ENCODE measurements at regions of chr7 and their contacts with region 1.

Region 1: GRCh38 chr7:149028346-149029109 is at the start of gene PDIA4:
- DNase-seq: peak; percentile 98
- ATAC-seq: peak; percentile 95
- H3K4me3 ChIP-seq: peak within 1 kb of the TSS; percentile 90 to 95 (median 93)
- H3K27ac ChIP-seq: peak within 1 kb of the TSS; percentile 95
- H3K4me1 ChIP-seq: peaks cover 42% of the 10 kb centered on the region
- H3K27me3 ChIP-seq: no peaks in the 10 kb centered on the region; a peak in 1 of 5 replicates
- CTCF ChIP-seq: peak; percentile 3; the same call in 1 of the 2 replicates
- EP300 ChIP-seq: no peak; a peak in 1 of 4 replicates
- POLR2A ChIP-seq: peak; percentile 88 to 90
- RAD21 ChIP-seq: peak; percentile 51; the same call in 1 of the 2 replicates
- total RNA-seq, gene PDIA4: 171 and 402 TPM in 2 replicates

Region 2: GRCh38 chr7:148987010-148987750 is 41.3 kb before region 1 on chr7:
- CTCF ChIA-PET with region 1: no interaction called
- POLR2A ChIA-PET with region 1: interaction called, 4 read pairs
- in situ Hi-C with region 1: no loop called
- intact Hi-C with region 1: loop called (anchors 1 kb)
- DNase-seq: peak; percentile 87
- ATAC-seq: peak; percentile 94
- H3K4me3 ChIP-seq: peak overlapping the region; percentile 78 to 97 (median 88)
- H3K27ac ChIP-seq: peak overlapping the region; percentile 86
- H3K4me1 ChIP-seq: peaks cover 45% of the 10 kb centered on the region
- H3K27me3 ChIP-seq: peaks cover 0 to 3% of the 10 kb centered on the region in 2 experiments; a peak in 1 of 5 replicates
- CTCF ChIP-seq: no peak
- EP300 ChIP-seq: no peak
- POLR2A ChIP-seq: peak in 1 of 2 experiments; percentile 61; a peak in 2 of 4 replicates
- RAD21 ChIP-seq: no peak